ENCODE measurements at regions of chr3 and their contacts with region 1.

Region 1: DNA sequence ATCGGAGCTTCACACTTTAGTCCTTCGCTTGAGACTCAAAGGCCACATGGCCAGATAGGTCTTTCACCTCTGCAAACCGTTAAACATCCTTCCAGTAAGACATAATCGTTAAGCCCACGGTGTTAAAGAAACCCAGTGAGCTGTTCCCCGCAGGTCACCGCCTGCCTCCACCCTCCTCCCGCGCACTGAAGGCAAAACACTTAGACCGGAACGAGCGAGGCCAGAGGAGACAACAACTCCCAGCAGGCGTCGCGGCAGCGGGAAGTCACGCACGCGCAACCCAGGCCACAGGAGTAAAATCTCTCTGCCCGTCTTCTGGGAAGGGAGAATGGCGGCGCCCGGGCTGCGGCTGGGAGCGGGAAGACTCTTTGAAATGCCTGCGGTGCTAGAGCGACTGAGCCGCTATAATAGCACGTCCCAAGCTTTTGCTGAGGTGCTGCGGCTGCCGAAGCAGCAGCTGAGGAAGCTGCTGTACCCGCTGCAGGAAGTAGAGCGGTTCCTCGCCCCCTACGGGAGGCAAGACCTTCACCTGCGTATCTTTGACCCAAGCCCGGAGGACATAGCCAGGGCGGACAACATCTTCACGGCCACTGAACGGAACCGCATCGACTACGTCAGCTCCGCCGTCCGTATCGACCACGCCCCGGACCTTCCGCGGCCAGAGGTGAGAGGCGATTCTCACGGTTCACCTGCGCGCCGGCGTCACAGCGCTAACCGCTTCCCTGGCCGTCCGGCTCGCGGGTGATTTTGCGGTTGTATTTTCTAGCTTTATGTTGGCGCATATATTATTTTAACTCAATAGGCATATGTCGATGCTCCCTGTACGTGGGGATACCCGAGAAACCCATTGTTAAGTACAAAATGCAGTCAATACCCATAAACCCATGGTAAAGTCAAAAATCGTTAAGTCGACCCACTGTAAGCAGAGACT is at the start of gene GTPBP8:
- DNase-seq: peak; percentile 61 to 93 (median 83)
- ATAC-seq: peak; percentile 84
- H3K4me3 ChIP-seq: peak within 1 kb of the TSS; percentile 97 to 98
- H3K4me3 Mint-ChIP-seq: peak within 1 kb of the TSS; percentile 93
- H3K27ac ChIP-seq: peak within 1 kb of the TSS; percentile 88 to 99
- H3K27ac Mint-ChIP-seq: peak within 1 kb of the TSS; percentile 97
- H3K4me1 ChIP-seq: peaks cover 22% of the 10 kb centered on the region
- H3K4me1 Mint-ChIP-seq: peaks cover 57% of the 10 kb centered on the region
- H3K27me3 ChIP-seq: no peaks in the 10 kb centered on the region
- H3K27me3 Mint-ChIP-seq: no peaks in the 10 kb centered on the region
- CTCF ChIP-seq: peak; percentile 24
- total RNA-seq, gene GTPBP8: 20.1 to 22.3 TPM

Region 2: DNA sequence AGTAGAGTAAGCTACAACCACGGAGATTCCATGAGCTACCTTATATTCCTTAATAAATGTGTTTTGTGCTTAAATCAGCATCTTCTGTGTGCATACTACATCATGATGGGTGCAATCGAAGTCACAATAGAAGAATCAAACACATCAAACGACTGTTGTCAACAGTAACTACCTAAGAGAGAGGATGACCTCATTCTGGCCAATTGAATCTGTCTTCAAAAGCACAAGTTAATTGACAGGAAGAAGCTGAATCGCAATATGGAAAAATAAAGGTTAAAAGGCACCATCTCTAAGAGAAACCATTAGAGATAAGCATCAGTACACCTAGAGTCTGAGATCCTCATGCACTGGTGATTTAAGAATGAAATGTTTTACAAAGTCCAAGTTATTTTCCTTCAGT is 183.3 kb before region 1 on chr3:
- CTCF ChIA-PET with region 1: no interaction called
- POLR2A ChIA-PET with region 1: no interaction called
- intact Hi-C with region 1: no loop called
- DNase-seq: peak in 1 of 9 experiments; percentile 9
- ATAC-seq: no peak
- H3K4me3 ChIP-seq: no peak overlapping the region
- H3K4me3 Mint-ChIP-seq: no peak overlapping the region
- H3K27ac ChIP-seq: no peak overlapping the region
- H3K27ac Mint-ChIP-seq: no peak overlapping the region
- H3K4me1 ChIP-seq: peaks cover 3% of the 10 kb centered on the region
- H3K4me1 Mint-ChIP-seq: peaks cover 19% of the 10 kb centered on the region
- H3K27me3 ChIP-seq: no peaks in the 10 kb centered on the region
- H3K27me3 Mint-ChIP-seq: no peaks in the 10 kb centered on the region
- CTCF ChIP-seq: no peak

Region 3: GRCh38 chr3:112858410-112859069 is 132.4 kb before region 1 on chr3:
- CTCF ChIA-PET with region 1: no interaction called
- POLR2A ChIA-PET with region 1: no interaction called
- intact Hi-C with region 1: no loop called
- DNase-seq: peak in 1 of 9 experiments; percentile 29
- ATAC-seq: peak; percentile 29
- H3K4me3 ChIP-seq: no peak overlapping the region
- H3K4me3 Mint-ChIP-seq: no peak overlapping the region
- H3K27ac ChIP-seq: no peak overlapping the region
- H3K27ac Mint-ChIP-seq: peak overlapping the region; percentile 42
- H3K4me1 ChIP-seq: peaks cover 12% of the 10 kb centered on the region
- H3K4me1 Mint-ChIP-seq: peaks cover 25% of the 10 kb centered on the region
- H3K27me3 ChIP-seq: no peaks in the 10 kb centered on the region
- H3K27me3 Mint-ChIP-seq: no peaks in the 10 kb centered on the region
- CTCF ChIP-seq: no peak

Region 4: DNA sequence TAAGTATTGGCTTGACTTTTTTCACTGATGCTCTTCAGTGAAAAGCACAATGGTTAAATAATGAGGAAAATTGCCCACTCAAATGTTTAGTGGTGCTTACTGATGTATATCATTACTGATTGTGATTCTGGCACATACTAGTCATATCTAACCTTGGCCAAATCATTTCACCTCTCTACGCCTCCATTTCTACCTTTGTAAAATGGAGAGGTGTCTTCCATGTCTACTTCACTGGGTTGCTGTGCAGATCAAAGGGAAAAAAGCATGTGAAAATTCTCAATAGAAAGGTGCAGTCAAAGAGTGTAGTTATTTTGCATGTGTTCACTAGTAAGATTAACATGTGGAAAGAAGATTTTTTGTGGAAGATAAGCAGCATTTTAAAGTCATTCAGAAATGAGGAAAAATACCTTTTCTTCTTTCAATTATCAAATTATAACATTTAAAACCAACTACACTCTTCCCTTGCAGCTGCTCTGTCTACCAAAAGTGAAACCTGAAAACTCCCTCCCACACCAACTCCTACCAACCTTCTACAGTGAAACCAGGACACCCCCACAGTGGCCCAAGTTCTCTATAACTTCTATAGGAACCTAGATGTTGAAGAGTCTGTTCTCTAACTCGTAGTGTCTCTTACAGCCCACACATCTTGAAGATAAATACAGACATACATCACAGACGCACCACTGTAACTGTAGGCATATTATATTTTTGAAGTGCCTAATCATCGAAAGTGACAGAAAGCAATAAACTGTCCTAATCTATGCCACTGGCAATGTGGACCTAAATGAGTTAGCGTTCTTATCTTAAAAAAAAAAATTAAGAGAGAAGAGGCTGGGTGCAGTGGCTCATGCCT is 17.4 kb before region 1 on chr3:
- CTCF ChIA-PET with region 1: interaction called, 40 read pairs
- POLR2A ChIA-PET with region 1: interaction called, 15 read pairs
- intact Hi-C with region 1: loop called in 1 of 2 experiments (anchors 2 kb)
- DNase-seq: peak in 5 of 9 experiments; percentile 18 to 74 (median 35)
- ATAC-seq: peak; percentile 86
- H3K4me3 ChIP-seq: peak overlapping the region; percentile 45 to 61
- H3K4me3 Mint-ChIP-seq: peak overlapping the region; percentile 93
- H3K27ac ChIP-seq: peak overlapping the region; percentile 34 to 81
- H3K27ac Mint-ChIP-seq: peak overlapping the region; percentile 97
- H3K4me1 ChIP-seq: peaks cover 66% of the 10 kb centered on the region
- H3K4me1 Mint-ChIP-seq: peaks cover 82% of the 10 kb centered on the region
- H3K27me3 ChIP-seq: no peaks in the 10 kb centered on the region
- H3K27me3 Mint-ChIP-seq: no peaks in the 10 kb centered on the region
- CTCF ChIP-seq: no peak

Region 5: GRCh38 chr3:112979240-112979832 is 11.6 kb before region 1 on chr3:
- CTCF ChIA-PET with region 1: interaction called, 40 read pairs
- POLR2A ChIA-PET with region 1: interaction called, 15 read pairs
- intact Hi-C with region 1: loop called in 1 of 2 experiments (anchors 2 kb)
- DNase-seq: peak in 3 of 9 experiments; percentile 37 to 72 (median 66)
- ATAC-seq: peak; percentile 37
- H3K4me3 ChIP-seq: no peak overlapping the region
- H3K4me3 Mint-ChIP-seq: no peak overlapping the region
- H3K27ac ChIP-seq: no peak overlapping the region
- H3K27ac Mint-ChIP-seq: no peak overlapping the region
- H3K4me1 ChIP-seq: peaks cover 38% of the 10 kb centered on the region
- H3K4me1 Mint-ChIP-seq: peaks cover 56% of the 10 kb centered on the region
- H3K27me3 ChIP-seq: no peaks in the 10 kb centered on the region
- H3K27me3 Mint-ChIP-seq: no peaks in the 10 kb centered on the region
- CTCF ChIP-seq: peak; percentile 93

Region 6: GRCh38 chr3:113002679-113003078 is 11.7 kb after region 1 on chr3:
- CTCF ChIA-PET with region 1: interaction called, 6 read pairs
- POLR2A ChIA-PET with region 1: interaction called, 14 read pairs
- intact Hi-C with region 1: loop called (anchors 1 to 2 kb)
- DNase-seq: peak in 7 of 9 experiments; percentile 24 to 68 (median 49)
- ATAC-seq: peak; percentile 47
- H3K4me3 ChIP-seq: no peak overlapping the region
- H3K4me3 Mint-ChIP-seq: no peak overlapping the region
- H3K27ac ChIP-seq: peak overlapping the region in 1 of 2 experiments; percentile 48
- H3K27ac Mint-ChIP-seq: peak overlapping the region; percentile 89
- H3K4me1 ChIP-seq: peaks cover 39% of the 10 kb centered on the region
- H3K4me1 Mint-ChIP-seq: peaks cover 71% of the 10 kb centered on the region
- H3K27me3 ChIP-seq: no peaks in the 10 kb centered on the region
- H3K27me3 Mint-ChIP-seq: no peaks in the 10 kb centered on the region
- CTCF ChIP-seq: no peak

Region 7: DNA sequence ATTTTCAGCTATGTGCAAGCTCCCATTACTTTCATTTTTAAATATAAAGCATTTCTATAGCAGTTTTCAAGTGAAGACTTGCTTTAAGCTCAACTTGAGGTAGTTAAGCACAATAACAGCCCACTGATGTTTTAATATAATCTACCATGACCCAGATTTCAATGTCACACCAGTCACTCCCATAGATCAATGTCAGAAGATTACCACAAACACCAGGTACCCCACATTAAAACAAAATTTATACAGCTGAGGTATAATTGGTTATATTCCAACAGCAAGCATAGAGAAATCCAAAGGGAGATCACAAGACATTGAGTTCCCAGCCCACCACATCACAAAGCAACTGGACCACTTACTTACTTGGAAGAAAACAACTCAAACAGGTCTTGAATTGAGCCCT is 22.7 kb after region 1 on chr3:
- CTCF ChIA-PET with region 1: interaction called, 3 read pairs
- POLR2A ChIA-PET with region 1: interaction called, 14 read pairs
- intact Hi-C with region 1: loop called in 1 of 2 experiments (anchors 2 kb)
- DNase-seq: peak in 1 of 9 experiments; percentile 15
- ATAC-seq: no peak
- H3K4me3 ChIP-seq: no peak overlapping the region
- H3K4me3 Mint-ChIP-seq: no peak overlapping the region
- H3K27ac ChIP-seq: no peak overlapping the region
- H3K27ac Mint-ChIP-seq: peak overlapping the region; percentile 76
- H3K4me1 ChIP-seq: peaks cover 20% of the 10 kb centered on the region
- H3K4me1 Mint-ChIP-seq: peaks cover 78% of the 10 kb centered on the region
- H3K27me3 ChIP-seq: no peaks in the 10 kb centered on the region
- H3K27me3 Mint-ChIP-seq: no peaks in the 10 kb centered on the region
- CTCF ChIP-seq: no peak

Region 8: DNA sequence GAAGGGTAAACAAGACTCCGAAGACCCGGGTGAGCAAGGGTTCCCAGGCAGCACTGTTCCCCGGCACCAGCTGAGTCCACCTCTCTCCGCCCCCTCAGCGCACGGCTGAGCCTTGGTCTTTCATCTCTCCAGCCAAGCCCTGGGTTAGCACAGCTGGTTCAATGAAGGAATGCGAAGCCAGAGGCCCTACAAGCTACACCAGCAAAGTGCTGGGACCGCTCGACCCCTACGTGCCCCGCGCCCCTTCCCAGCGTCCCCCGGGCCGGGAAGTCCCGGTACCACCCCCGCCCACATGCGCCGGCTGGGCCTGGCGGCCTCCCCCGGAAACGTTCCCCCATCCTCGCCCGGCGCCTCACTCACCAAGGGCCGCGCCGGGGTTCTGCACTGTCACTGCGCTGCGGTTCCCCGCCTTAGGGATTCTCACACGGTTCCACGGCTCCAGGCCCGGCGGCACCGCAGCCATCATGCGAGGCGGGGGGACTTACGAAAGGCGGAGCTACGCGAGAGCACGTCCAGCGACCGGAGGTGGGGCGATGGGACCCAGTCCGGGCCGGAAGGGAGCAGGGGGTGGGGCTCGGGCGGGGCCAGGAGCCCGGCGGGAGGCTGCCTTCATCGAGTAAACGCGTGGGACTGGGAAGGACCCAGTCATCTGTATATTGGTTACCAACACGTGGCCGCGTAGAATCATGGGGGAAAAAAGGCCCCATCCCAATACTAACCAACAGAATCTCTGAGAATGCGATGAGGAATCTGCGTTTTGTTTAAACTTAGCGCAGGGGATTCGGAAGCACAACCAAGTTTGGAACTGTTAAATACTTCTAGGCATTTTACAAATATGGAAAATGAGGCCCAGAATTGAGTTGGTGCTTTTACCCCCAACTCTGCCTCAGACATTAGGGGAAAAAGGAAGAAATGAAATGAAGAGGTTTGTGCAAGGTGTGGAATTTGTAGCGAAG is 28.5 kb after region 1 on chr3:
- CTCF ChIA-PET with region 1: interaction called, 3 read pairs
- POLR2A ChIA-PET with region 1: interaction called, 14 read pairs
- intact Hi-C with region 1: loop called (anchors 1 to 2 kb)
- DNase-seq: peak; percentile 54 to 95 (median 82)
- ATAC-seq: peak; percentile 87
- H3K4me3 ChIP-seq: peak overlapping the region; percentile 57 to 87
- H3K4me3 Mint-ChIP-seq: peak overlapping the region; percentile 95
- H3K27ac ChIP-seq: peak overlapping the region; percentile 67 to 95
- H3K27ac Mint-ChIP-seq: peak overlapping the region; percentile 94
- H3K4me1 ChIP-seq: peaks cover 29% of the 10 kb centered on the region
- H3K4me1 Mint-ChIP-seq: peaks cover 64% of the 10 kb centered on the region
- H3K27me3 ChIP-seq: no peaks in the 10 kb centered on the region
- H3K27me3 Mint-ChIP-seq: no peaks in the 10 kb centered on the region
- CTCF ChIP-seq: no peak

Region 9: DNA sequence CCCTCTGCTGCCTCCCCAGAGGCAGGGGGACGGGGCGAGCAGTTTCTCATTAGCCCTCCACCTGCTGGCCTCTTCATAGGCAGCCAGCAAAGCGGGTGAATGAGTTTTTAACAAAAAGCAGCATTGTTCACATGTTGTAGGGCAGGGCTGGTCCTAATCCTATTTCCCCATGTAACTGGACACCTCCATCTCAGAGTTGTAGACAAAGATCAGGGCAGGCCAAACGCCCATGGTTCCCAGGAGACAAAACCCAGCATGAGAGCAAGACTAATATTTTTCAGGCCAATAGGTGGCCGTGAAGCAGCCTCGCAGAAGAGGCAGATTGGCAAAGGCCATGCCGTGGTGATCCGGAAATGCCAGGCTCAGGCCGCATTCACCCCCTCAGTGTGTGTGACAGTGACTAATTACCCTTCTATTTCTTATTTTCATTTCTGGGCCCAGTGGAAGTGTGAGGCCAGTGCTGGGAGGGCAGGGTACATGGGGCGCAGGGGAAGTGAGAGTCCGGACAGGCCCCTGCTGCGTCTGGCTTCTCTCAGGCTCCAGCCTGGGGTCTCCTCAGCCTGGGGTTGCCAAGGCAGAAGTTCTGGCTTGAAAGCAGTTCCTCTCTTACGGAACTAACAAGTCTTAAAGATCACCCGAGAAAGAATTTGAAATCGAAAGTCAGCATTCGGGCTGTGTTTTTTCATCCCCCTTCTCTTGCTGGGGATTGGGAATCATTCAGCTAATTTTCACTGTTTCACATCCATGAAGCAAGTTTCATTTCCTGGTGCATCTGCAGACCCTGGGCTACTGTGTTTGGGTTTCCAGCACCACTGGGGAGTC is 285.2 kb after region 1 on chr3:
- CTCF ChIA-PET with region 1: no interaction called
- POLR2A ChIA-PET with region 1: no interaction called
- intact Hi-C with region 1: no loop called
- DNase-seq: peak in 1 of 9 experiments; percentile 14
- ATAC-seq: no peak
- H3K4me3 ChIP-seq: no peak overlapping the region
- H3K4me3 Mint-ChIP-seq: peak overlapping the region; percentile 35
- H3K27ac ChIP-seq: no peak overlapping the region
- H3K27ac Mint-ChIP-seq: no peak overlapping the region
- H3K4me1 ChIP-seq: no peaks in the 10 kb centered on the region
- H3K4me1 Mint-ChIP-seq: peaks cover 7% of the 10 kb centered on the region
- H3K27me3 ChIP-seq: no peaks in the 10 kb centered on the region
- H3K27me3 Mint-ChIP-seq: peaks cover 2% of the 10 kb centered on the region
- CTCF ChIP-seq: no peak

Region 10: GRCh38 chr3:113531826-113532697 is 541.1 kb after region 1 on chr3 and contains the start of gene SIDT1:
- CTCF ChIA-PET with region 1: no interaction called
- POLR2A ChIA-PET with region 1: no interaction called
- intact Hi-C with region 1: no loop called
- DNase-seq: peak; percentile 50 to 90 (median 73)
- ATAC-seq: peak; percentile 77
- H3K4me3 ChIP-seq: peak within 1 kb of the TSS; percentile 83 to 93
- H3K4me3 Mint-ChIP-seq: peak within 1 kb of the TSS; percentile 96
- H3K27ac ChIP-seq: peak within 1 kb of the TSS; percentile 87 to 93
- H3K27ac Mint-ChIP-seq: peak within 1 kb of the TSS; percentile 97
- H3K4me1 ChIP-seq: peaks cover 43% of the 10 kb centered on the region
- H3K4me1 Mint-ChIP-seq: peaks cover 52% of the 10 kb centered on the region
- H3K27me3 ChIP-seq: no peaks in the 10 kb centered on the region
- H3K27me3 Mint-ChIP-seq: no peaks in the 10 kb centered on the region
- CTCF ChIP-seq: no peak
- total RNA-seq, gene SIDT1: 32.1 to 38.3 TPM

Measured in CD8-positive, alpha-beta T cell (primary cell).